Right ventricle myocardium superior (tissue), 1 donor: ENCODE measurements at regions of chr11 and their contacts with region 1.

Region 1: GRCh38 chr11:67656278-67656922 is 5.9 kb upstream of the ACY3 start:
- DNase-seq: no peak
- ATAC-seq: no peak

Region 2: GRCh38 chr11:67572747-67573419 is 83.5 kb before region 1 on chr11:
- intact Hi-C with region 1: loop called (anchors 10 kb)
- DNase-seq: peak; percentile 56
- ATAC-seq: peak; percentile 51

Region 3: DNA sequence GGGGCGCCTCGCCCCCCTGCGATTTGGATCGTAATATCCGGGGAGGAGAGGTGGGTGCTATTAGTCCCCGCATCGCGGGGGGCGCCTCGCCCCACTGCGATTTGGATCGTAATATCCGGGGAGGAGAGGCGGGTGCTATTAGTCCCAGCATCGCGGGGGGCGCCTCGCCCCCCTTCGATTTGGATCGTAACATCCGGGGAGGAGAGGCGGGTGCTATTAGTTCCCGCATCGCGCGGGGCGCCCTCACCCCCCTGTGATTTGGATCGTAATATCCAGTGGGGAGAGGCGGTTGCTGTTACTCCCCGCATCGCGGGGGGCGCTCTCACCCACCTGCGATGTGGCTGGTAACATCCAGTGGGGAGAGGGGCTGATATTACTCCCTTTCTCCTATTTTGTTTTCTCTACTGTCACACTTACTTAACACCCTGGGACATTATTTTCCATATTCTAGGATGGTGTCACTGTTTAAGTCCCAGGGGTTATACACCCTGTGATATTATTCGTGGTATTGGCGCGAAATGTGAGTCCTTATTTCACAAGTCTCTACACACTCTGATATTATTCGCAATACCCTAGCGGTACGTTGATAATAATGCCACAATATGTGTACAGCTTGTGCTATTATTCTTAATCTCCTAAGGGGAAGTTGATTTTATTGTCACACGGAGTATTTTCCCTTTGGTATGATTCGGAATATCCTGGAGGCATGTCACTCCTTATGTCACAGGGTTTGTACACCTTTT is 75.8 kb after region 1 on chr11:
- intact Hi-C with region 1: no loop called
- DNase-seq: no peak
- ATAC-seq: no peak